Left colon (tissue), 2 donors: ENCODE measurements at regions of chrX and their contacts with region 1.

Region 1: GRCh38 chrX:9341291-9342201 is 123.3 kb upstream of the TBL1X start:
- DNase-seq: peak; percentile 76 to 84
- ATAC-seq: peak; percentile 68

Region 2: DNA sequence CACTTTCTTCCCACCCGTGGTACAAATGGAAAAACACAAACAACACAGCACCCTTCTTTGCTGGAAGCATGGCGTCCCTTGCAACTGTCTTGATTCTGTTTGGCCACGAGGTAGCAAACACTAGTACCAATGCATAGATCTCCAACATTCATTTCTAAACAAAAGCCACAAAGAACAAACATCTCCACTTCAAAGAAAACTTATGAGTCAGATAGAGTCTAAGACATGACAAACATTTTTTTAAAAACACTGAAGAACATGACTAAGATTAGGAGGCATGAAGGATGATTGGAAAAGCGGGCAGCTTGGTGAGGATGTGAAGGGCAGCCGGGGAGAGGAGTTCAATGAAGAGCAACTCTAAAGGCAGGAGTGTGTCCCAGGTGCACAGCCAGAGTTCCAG is 110.1 kb before region 1 on chrX:
- intact Hi-C with region 1: no loop called
- DNase-seq: no peak
- ATAC-seq: no peak

Region 3: DNA sequence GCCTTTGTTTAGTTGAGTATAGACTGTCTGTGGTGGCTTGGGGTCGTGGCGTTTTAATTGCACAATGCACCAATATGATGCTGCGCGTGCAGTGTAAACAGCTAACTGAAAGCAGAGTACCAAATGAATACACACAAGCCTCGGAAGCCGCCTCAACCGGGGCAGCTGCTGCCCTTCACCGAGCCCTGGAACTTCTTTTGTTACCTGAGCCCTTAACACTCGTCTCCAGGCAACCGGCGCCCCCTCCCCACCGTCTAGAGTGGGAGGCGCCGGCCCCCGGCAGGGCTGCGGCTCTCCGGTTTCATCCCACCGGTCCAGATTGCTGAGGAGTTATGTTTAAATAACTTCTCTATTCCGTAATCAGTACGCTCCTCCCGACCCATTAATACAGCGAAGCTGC is 49.9 kb before region 1 on chrX:
- intact Hi-C with region 1: no loop called
- DNase-seq: no peak
- ATAC-seq: no peak

Region 4: GRCh38 chrX:9464435-9465371 is 123.2 kb after region 1 on chrX and contains the start of gene TBL1X:
- intact Hi-C with region 1: loop called in 1 of 2 experiments (anchors 5 kb)
- DNase-seq: peak; percentile 30 to 64
- ATAC-seq: peak; percentile 11
- total RNA-seq, gene TBL1X: 15.4 to 17.3 TPM